H1 (cell line): ENCODE measurements at regions of chr3 and their contacts with region 1.

Region 1: GRCh38 chr3:8769088-8769822 is at the start of gene OXTR:
- DNase-seq: peak; percentile 72 to 97
- H3K4me3 ChIP-seq: peak within 1 kb of the TSS; percentile 20 to 53 (median 37); a peak in 7 of 8 replicates
- H3K27ac ChIP-seq: no peak within 1 kb of the TSS
- H3K4me1 ChIP-seq: peaks cover 0 to 17% (median 8%) of the 10 kb centered on the region in 4 experiments; a peak in 6 of 7 replicates
- H3K27me3 ChIP-seq: peaks cover 24 to 38% (median 37%) of the 10 kb centered on the region in 4 experiments
- CTCF ChIP-seq: peak; percentile 98 to 99 (median 98)
- EP300 ChIP-seq: no peak; a peak in 1 of 3 replicates
- POLR2A ChIP-seq: no peak
- RAD21 ChIP-seq: peak; percentile 86 to 90
- total RNA-seq, gene OXTR: 2.2 and 2.3 TPM in 2 replicates

Region 2: GRCh38 chr3:8663177-8664061 is 105.8 kb before region 1 on chr3:
- CTCF ChIA-PET with region 1: interaction called, 30 read pairs
- POLR2A ChIA-PET with region 1: no interaction called
- DNase-seq: peak; percentile 74 to 94
- H3K4me3 ChIP-seq: no peak overlapping the region
- H3K27ac ChIP-seq: no peak overlapping the region
- H3K4me1 ChIP-seq: peaks cover 0 to 6% (median 1%) of the 10 kb centered on the region in 4 experiments; a peak in 2 of 7 replicates
- H3K27me3 ChIP-seq: peaks cover 0 to 3% (median 0%) of the 10 kb centered on the region in 4 experiments; a peak in 2 of 7 replicates
- CTCF ChIP-seq: peak; percentile 66 to 80 (median 76)
- EP300 ChIP-seq: no peak
- POLR2A ChIP-seq: no peak
- RAD21 ChIP-seq: peak; percentile 67 to 76

Region 3: DNA sequence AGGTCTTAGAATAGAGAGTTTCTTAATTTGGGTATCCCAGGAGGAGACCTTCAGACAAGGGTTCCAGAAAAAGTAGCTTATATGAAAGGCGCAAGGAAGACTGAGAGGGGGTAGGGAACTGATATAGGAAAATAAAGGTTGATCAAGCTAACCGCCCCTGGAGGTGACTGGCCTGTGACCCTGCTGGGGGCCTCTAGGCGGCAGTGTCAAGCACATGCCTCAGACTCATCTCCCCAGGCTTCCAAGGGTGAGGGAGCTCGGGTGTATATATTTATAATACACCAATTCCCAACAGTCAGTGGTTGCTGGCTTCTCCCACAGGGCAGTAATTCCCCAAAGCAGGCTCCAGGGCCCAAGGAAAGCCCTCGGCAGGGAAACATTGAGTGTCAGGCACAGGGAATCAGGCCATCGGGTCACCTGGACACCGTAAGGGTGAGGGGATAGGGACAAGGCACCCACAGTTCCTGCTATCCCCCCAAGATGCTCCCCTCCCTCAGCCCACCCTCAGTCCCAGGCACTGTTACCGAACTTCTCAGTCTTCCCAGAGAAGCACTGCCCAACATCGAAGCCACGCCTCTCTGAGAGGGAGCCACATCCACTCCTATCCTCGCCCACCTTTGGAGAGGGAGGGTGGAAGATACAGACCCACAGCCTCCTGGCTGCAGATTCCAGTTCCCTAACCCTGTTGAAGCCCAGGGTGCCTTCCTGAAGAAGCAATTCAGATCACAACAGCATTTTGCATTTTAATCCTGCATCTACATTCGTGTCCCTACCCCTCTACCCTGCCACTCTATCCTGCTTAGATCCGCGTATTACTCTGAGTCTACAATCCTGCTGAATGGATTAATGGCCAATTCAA is 55.1 kb before region 1 on chr3:
- CTCF ChIA-PET with region 1: interaction called, 16 read pairs
- POLR2A ChIA-PET with region 1: interaction called, 3 read pairs
- DNase-seq: peak in 1 of 2 experiments; percentile 67
- H3K4me3 ChIP-seq: no peak overlapping the region
- H3K27ac ChIP-seq: no peak overlapping the region
- H3K4me1 ChIP-seq: no peaks in the 10 kb centered on the region; a peak in 1 of 7 replicates
- H3K27me3 ChIP-seq: peaks cover 39 to 66% (median 63%) of the 10 kb centered on the region in 4 experiments
- CTCF ChIP-seq: peak; percentile 73 to 77 (median 77)
- EP300 ChIP-seq: no peak
- POLR2A ChIP-seq: no peak
- RAD21 ChIP-seq: peak; percentile 45 to 63

Region 4: GRCh38 chr3:8741581-8742261 is 27.5 kb before region 1 on chr3:
- CTCF ChIA-PET with region 1: interaction called, 11 read pairs
- POLR2A ChIA-PET with region 1: no interaction called
- DNase-seq: peak in 1 of 2 experiments; percentile 70
- H3K4me3 ChIP-seq: peak overlapping the region in 1 of 4 experiments; percentile 42; a peak in 3 of 8 replicates
- H3K27ac ChIP-seq: no peak overlapping the region
- H3K4me1 ChIP-seq: peaks cover 1 to 20% (median 8%) of the 10 kb centered on the region in 4 experiments
- H3K27me3 ChIP-seq: peaks cover 0 to 4% (median 0%) of the 10 kb centered on the region in 4 experiments; a peak in 1 of 7 replicates
- CTCF ChIP-seq: no peak; a peak in 1 of 4 replicates
- EP300 ChIP-seq: no peak
- POLR2A ChIP-seq: no peak
- RAD21 ChIP-seq: no peak

Region 5: DNA sequence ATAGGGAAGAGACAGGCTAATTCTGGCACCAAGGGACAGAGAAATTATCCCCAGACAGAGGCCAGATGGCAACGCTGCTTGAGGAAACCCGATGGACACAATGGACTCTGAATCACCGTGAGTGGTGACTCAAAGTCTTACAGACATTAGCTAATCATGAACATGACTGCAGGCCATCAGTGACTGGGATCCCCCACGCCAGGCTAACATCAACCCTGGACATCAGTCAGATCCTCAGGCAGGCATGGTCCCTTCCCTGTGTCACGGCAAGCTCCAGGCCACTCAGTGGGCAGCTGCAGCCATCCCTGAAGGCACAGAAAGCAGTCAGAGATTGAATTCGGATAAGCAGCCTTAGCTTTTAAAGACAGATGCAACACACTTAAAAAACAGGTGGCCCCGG is 24.0 kb after region 1 on chr3:
- CTCF ChIA-PET with region 1: interaction called, 15 read pairs
- POLR2A ChIA-PET with region 1: interaction called, 3 read pairs
- DNase-seq: no peak
- H3K4me3 ChIP-seq: no peak overlapping the region
- H3K27ac ChIP-seq: no peak overlapping the region
- H3K4me1 ChIP-seq: no peaks in the 10 kb centered on the region
- H3K27me3 ChIP-seq: no peaks in the 10 kb centered on the region; a peak in 1 of 7 replicates
- CTCF ChIP-seq: no peak
- EP300 ChIP-seq: no peak
- POLR2A ChIP-seq: no peak
- RAD21 ChIP-seq: no peak

Region 6: GRCh38 chr3:8824238-8824637 is 55.0 kb after region 1 on chr3:
- CTCF ChIA-PET with region 1: no interaction called
- POLR2A ChIA-PET with region 1: no interaction called
- DNase-seq: no peak
- H3K4me3 ChIP-seq: no peak overlapping the region
- H3K27ac ChIP-seq: no peak overlapping the region
- H3K4me1 ChIP-seq: no peaks in the 10 kb centered on the region
- H3K27me3 ChIP-seq: no peaks in the 10 kb centered on the region
- CTCF ChIP-seq: no peak
- EP300 ChIP-seq: no peak
- POLR2A ChIP-seq: no peak
- RAD21 ChIP-seq: no peak

Region 7: GRCh38 chr3:8888301-8888915 is 119.2 kb after region 1 on chr3:
- CTCF ChIA-PET with region 1: no interaction called
- POLR2A ChIA-PET with region 1: no interaction called
- DNase-seq: no peak
- H3K4me3 ChIP-seq: no peak overlapping the region
- H3K27ac ChIP-seq: no peak overlapping the region
- H3K4me1 ChIP-seq: no peaks in the 10 kb centered on the region
- H3K27me3 ChIP-seq: no peaks in the 10 kb centered on the region
- CTCF ChIP-seq: no peak
- EP300 ChIP-seq: no peak
- POLR2A ChIP-seq: no peak
- RAD21 ChIP-seq: no peak